Panc1 (cell line): ENCODE measurements at regions of chr4 and their contacts with region 1.

Region 1: GRCh38 chr4:149521611-149522425 is 293.8 kb downstream of the IQCM start:
- DNase-seq: no peak
- ATAC-seq: no peak
- H3K4me3 ChIP-seq: no peak overlapping the region
- H3K27ac ChIP-seq: no peak overlapping the region
- H3K4me1 ChIP-seq: no peaks in the 10 kb centered on the region
- H3K27me3 ChIP-seq: no peaks in the 10 kb centered on the region
- CTCF ChIP-seq: no peak

Region 2: GRCh38 chr4:148445860-148446330 is 1075.9 kb before region 1 on chr4:
- CTCF ChIA-PET with region 1: no interaction called
- POLR2A ChIA-PET with region 1: interaction called, 10 read pairs
- in situ Hi-C with region 1: no loop called
- intact Hi-C with region 1: no loop called
- DNase-seq: no peak
- ATAC-seq: no peak
- H3K4me3 ChIP-seq: peak overlapping the region; percentile 32 to 33; a peak in 3 of 4 replicates
- H3K27ac ChIP-seq: no peak overlapping the region
- H3K4me1 ChIP-seq: no peaks in the 10 kb centered on the region; the same call in 1 of the 2 replicates
- H3K27me3 ChIP-seq: peaks cover 8% of the 10 kb centered on the region
- CTCF ChIP-seq: no peak

Region 3: DNA sequence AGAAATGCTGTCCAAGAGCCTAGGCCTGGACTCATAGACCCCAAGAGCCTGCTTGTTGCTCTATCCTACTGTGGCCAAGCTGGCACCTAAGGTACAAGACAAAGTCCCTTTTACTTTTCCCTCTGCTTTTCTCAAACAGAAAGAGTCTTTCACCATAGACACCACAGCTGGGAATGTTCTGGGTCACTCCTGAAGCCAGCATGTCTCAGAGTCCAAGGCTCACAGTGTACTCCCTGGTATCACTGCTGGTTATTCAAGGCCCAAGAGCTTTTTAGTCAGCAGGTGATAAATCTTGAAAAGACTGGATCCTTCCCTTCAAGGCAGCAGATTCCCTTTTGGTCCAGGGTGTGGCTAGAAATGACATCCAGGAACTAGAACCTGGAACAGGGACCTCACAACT is 35.0 kb before region 1 on chr4:
- CTCF ChIA-PET with region 1: no interaction called
- POLR2A ChIA-PET with region 1: no interaction called
- in situ Hi-C with region 1: no loop called
- intact Hi-C with region 1: no loop called
- DNase-seq: no peak
- ATAC-seq: no peak
- H3K4me3 ChIP-seq: no peak overlapping the region
- H3K27ac ChIP-seq: no peak overlapping the region
- H3K4me1 ChIP-seq: no peaks in the 10 kb centered on the region
- H3K27me3 ChIP-seq: no peaks in the 10 kb centered on the region
- CTCF ChIP-seq: no peak